Gastrocnemius medialis (tissue), 4 donors: ENCODE measurements at regions of chr10 and their contacts with region 1.

Region 1: DNA sequence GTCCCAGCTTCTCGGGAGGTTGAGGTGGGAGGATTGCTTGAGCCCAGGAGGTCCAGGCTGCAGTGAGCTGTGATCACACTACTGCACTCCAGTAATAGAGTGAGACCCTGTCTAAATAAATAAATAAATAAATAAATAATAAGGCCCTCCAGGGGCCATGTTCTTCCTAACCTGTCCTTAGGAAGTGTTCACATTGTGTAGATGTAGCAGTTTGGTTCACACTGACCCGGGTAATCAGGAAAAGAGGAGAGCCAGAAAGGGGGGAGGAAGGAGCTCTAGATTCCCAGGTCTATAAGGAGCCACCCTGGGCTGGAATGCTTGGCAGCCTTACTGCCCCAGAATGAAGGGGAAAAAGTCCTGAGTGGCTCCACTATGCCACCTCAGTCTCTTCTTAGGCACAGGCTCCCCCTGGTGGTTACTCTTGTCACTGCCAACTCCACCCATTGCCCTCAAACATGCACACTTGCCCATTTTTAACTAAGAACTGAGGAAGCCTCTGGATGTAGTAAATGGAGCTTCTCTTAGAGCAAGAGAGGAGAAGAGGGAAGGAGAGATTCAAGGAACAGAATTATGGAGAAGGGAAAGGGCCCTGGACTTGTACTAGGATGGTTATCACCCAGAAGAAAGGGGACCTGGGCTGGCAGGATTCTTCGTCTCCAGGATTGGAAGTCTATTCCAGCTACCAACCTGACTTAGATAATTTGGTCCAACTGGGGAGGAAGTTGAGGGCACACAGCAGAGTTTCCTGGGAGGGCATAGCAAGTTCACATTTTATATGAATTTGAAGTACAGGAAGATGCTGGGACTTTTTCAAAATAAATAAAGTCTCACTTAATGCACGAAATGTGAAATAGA is 7.8 kb downstream of the HPS6 start:
- DNase-seq: peak; percentile 47 to 72
- ATAC-seq: peak; percentile 80 to 89
- H3K4me3 ChIP-seq: no peak overlapping the region
- H3K27ac ChIP-seq: no peak overlapping the region
- H3K4me1 ChIP-seq: peaks cover 14 to 17% of the 10 kb centered on the region in 2 donors
- H3K27me3 ChIP-seq: no peaks in the 10 kb centered on the region
- CTCF ChIP-seq: peak; percentile 70 to 92 (median 86)
- POLR2A ChIP-seq: no peak

Region 2: DNA sequence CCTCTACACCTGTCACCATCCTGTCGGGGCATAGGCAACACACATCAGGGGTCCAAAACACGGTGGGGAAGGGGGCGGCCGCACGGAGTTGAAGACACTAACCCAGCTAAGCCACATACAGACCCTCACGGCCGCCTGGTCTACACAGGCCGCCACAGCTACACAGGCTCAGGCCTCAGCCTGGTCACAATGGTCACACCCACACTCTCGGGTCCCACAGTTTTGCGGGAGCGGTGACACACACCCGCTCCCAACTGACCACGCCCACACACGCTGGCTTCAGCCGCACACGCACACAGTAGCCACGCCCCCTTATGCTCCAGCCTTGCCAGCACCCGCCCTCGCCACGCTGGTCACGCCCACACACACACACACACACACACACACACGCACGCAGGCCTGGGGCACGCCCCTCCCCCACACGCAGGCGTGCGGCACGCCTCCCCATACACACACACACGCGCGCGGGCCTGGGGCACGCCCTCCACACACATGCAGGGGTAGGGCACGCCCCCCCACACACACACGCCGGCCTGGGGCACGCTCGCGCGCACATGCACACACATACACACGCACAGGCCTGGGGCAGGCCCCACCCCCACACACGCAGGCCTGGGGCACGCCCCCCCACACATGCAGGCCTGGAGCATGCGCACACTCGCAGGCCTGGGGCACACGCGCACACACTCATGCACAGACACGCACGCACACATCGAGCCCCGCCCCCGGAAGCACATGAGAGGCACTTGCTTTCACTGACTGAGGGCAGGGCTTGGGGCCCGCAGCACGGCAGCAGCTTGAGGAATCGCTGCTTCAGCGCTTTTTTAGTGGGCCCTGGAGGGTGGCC is 242.4 kb before region 1 on chr10:
- in situ Hi-C with region 1: loop called in 1 of 4 experiments (anchors 10 kb)
- intact Hi-C with region 1: no loop called
- DNase-seq: peak; percentile 63 to 71
- ATAC-seq: peak; percentile 68 to 70
- H3K4me3 ChIP-seq: peak overlapping the region; percentile 40 to 67 (median 54)
- H3K27ac ChIP-seq: peak overlapping the region; percentile 8 to 44 (median 36)
- H3K4me1 ChIP-seq: peaks cover 15 to 19% of the 10 kb centered on the region in 2 donors
- H3K27me3 ChIP-seq: no peaks in the 10 kb centered on the region
- CTCF ChIP-seq: no peak
- POLR2A ChIP-seq: no peak

Region 3: GRCh38 chr10:101840741-101841453 is 232.0 kb before region 1 on chr10:
- in situ Hi-C with region 1: loop called in 2 of 4 experiments (anchors 10 kb)
- intact Hi-C with region 1: loop called (anchors 1 kb)
- DNase-seq: peak; percentile 40 to 60
- ATAC-seq: peak; percentile 80 to 86
- H3K4me3 ChIP-seq: peak overlapping the region; percentile 29 to 53 (median 46)
- H3K27ac ChIP-seq: no peak overlapping the region
- H3K4me1 ChIP-seq: peaks cover 21 to 39% of the 10 kb centered on the region in 2 donors
- H3K27me3 ChIP-seq: no peaks in the 10 kb centered on the region
- CTCF ChIP-seq: peak; percentile 72 to 95 (median 89)
- POLR2A ChIP-seq: no peak

Region 4: DNA sequence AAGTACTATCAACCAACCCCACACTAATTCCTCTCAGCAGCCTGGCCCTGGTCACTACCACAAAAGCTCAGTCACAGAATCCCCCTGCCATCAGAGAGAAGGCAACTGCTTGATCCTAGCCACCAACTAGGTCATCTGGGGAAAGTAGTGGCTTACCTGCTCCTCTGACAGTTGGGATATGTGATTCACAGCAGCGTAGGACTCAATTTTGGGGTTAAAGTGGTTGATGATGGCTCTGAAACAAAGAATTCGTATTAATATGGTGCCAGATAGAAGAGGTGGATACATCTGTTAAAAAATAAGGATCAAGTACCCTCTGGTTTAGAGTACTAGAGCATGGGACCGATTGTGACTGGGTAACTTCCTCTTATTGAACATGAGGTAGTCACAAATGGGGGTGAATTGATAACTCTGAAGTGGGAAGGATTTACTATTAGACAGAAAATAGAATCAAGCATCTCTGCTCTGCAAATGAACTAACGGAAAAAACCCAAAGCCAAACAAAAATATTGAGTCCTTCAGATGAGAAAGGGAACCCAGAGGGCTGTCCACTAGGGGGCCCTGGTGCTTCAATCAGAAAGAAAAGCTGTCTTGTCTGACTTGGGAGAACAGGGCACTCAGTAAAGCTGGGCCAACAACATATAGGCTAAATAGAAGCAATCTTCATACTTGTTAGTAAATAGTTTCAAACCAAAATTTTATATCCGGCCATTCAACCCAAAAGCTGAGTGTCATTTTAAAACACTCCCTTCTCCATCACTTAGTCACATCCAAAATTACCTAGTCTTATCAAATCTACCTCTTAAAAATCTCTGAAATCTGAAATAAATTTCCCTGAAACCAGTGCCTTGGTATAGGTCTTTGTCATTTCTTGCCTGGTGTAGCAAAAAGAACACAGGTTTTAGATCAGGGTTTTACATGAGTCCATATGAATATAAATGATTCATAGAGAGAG is 183.4 kb before region 1 on chr10:
- in situ Hi-C with region 1: no loop called
- intact Hi-C with region 1: loop called (anchors 5 kb)
- DNase-seq: peak; percentile 25 to 68
- ATAC-seq: peak; percentile 55 to 68
- H3K4me3 ChIP-seq: no peak overlapping the region
- H3K27ac ChIP-seq: no peak overlapping the region
- H3K4me1 ChIP-seq: peaks cover 12 to 13% of the 10 kb centered on the region in 2 donors
- H3K27me3 ChIP-seq: no peaks in the 10 kb centered on the region
- CTCF ChIP-seq: peak; percentile 75 to 84 (median 75)
- POLR2A ChIP-seq: no peak

Region 5: GRCh38 chr10:102175415-102175814 is 102.5 kb after region 1 on chr10:
- in situ Hi-C with region 1: no loop called
- intact Hi-C with region 1: no loop called
- DNase-seq: no peak
- ATAC-seq: no peak
- H3K4me3 ChIP-seq: no peak overlapping the region
- H3K27ac ChIP-seq: peak overlapping the region in 1 of 4 donors; percentile 56
- H3K4me1 ChIP-seq: peaks cover 4 to 8% of the 10 kb centered on the region in 2 donors
- H3K27me3 ChIP-seq: no peaks in the 10 kb centered on the region
- CTCF ChIP-seq: no peak
- POLR2A ChIP-seq: no peak